ENCODE measurements at regions of chr11 and their contacts with region 1.

Region 1: GRCh38 chr11:65779851-65780577 is 762 bp downstream of the AP5B1 start:
- DNase-seq: peak; percentile 21
- ATAC-seq: peak; percentile 94
- H3K4me3 ChIP-seq: peak overlapping the region; percentile 80
- H3K27ac ChIP-seq: peak overlapping the region; percentile 61
- H3K4me1 ChIP-seq: peaks cover 16% of the 10 kb centered on the region
- H3K27me3 ChIP-seq: no peaks in the 10 kb centered on the region
- CTCF ChIP-seq: peak; percentile 87 to 98 (median 92)
- EP300 ChIP-seq: no peak
- POLR2A ChIP-seq: peak; percentile 48
- RAD21 ChIP-seq: peak; percentile 76

Region 2: GRCh38 chr11:65711785-65712632 is 68.0 kb before region 1 on chr11 and contains the start of gene KAT5:
- CTCF ChIA-PET with region 1: interaction called, 42 read pairs
- POLR2A ChIA-PET with region 1: interaction called, 5 read pairs
- RAD21 ChIA-PET with region 1: interaction called, 18 read pairs
- SMC1A ChIA-PET with region 1: interaction called, 5 read pairs
- in situ Hi-C with region 1: loop called (anchors 5 kb)
- intact Hi-C with region 1: loop called (anchors 5 kb)
- DNase-seq: peak; percentile 94
- ATAC-seq: peak; percentile 89
- H3K4me3 ChIP-seq: peak within 1 kb of the TSS; percentile 85
- H3K27ac ChIP-seq: peak within 1 kb of the TSS; percentile 99
- H3K4me1 ChIP-seq: peaks cover 8% of the 10 kb centered on the region
- H3K27me3 ChIP-seq: no peaks in the 10 kb centered on the region
- CTCF ChIP-seq: peak; percentile 99 to 100 (median 100); a peak in 5 of 6 replicates
- EP300 ChIP-seq: peak in 1 of 2 experiments; percentile 16; a peak in 1 of 4 replicates
- POLR2A ChIP-seq: peak; percentile 92
- RAD21 ChIP-seq: peak; percentile 90
- polyA plus RNA-seq, gene KAT5: 3.4 to 10.2 TPM

Region 3: DNA sequence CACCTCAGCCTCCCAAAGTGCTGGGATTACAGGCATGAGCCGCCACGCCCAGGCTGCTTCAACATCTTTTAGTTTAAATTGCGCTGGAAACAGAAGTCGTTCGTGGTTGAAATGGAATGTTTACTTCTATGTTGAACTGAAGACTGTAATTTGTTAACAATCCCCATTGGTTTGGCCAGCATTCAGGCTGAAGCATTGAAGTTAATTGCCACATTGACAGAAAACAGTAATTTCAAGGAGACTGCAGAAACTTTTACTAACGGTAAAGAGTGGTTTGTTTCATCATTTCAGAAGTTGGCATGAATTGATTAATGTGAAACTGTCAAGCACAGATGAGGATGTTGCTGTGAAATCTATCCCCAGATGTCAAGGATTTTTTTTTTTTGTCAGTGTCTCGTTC is 13.5 kb before region 1 on chr11:
- CTCF ChIA-PET with region 1: interaction called, 45 read pairs
- POLR2A ChIA-PET with region 1: interaction called, 4 read pairs
- RAD21 ChIA-PET with region 1: interaction called, 9 read pairs
- SMC1A ChIA-PET with region 1: interaction called, 8 read pairs
- in situ Hi-C with region 1: no loop called
- intact Hi-C with region 1: no loop called
- DNase-seq: no peak
- ATAC-seq: no peak; the same call in 2 of the 3 replicates
- H3K4me3 ChIP-seq: no peak overlapping the region
- H3K27ac ChIP-seq: no peak overlapping the region
- H3K4me1 ChIP-seq: no peaks in the 10 kb centered on the region
- H3K27me3 ChIP-seq: no peaks in the 10 kb centered on the region
- CTCF ChIP-seq: no peak
- EP300 ChIP-seq: no peak
- POLR2A ChIP-seq: no peak
- RAD21 ChIP-seq: no peak

Region 4: DNA sequence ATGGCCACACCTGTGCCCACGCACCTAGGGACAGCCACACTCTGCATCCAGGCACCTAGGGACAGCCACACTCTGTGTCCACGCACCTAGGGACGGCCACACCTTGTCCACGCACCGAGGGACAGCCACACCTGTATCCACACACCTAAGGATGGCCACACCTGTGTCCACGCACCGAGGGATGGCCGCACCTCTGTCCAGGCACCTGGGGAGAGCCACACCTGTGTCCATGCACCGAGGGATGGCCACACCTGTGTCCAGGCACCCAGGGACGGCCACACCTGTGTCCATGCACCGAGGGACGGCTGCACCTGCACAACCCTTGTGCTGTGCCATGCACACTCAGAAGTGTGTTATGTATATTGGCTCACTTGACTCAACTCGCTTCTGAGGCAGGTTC is 17.7 kb after region 1 on chr11:
- CTCF ChIA-PET with region 1: interaction called, 62 read pairs
- POLR2A ChIA-PET with region 1: interaction called, 17 read pairs
- RAD21 ChIA-PET with region 1: interaction called, 13 read pairs
- SMC1A ChIA-PET with region 1: interaction called, 7 read pairs
- in situ Hi-C with region 1: no loop called
- intact Hi-C with region 1: no loop called
- DNase-seq: no peak
- ATAC-seq: no peak
- H3K4me3 ChIP-seq: no peak overlapping the region
- H3K27ac ChIP-seq: no peak overlapping the region
- H3K4me1 ChIP-seq: peaks cover 6% of the 10 kb centered on the region; the same call in 1 of the 2 replicates
- H3K27me3 ChIP-seq: no peaks in the 10 kb centered on the region
- CTCF ChIP-seq: no peak
- EP300 ChIP-seq: no peak
- POLR2A ChIP-seq: no peak
- RAD21 ChIP-seq: no peak

Region 5: GRCh38 chr11:65811764-65812497 is 31.9 kb after region 1 on chr11:
- CTCF ChIA-PET with region 1: interaction called, 192 read pairs
- POLR2A ChIA-PET with region 1: interaction called, 7 read pairs
- RAD21 ChIA-PET with region 1: interaction called, 91 read pairs
- SMC1A ChIA-PET with region 1: interaction called, 41 read pairs
- in situ Hi-C with region 1: no loop called
- intact Hi-C with region 1: no loop called
- DNase-seq: no peak
- ATAC-seq: peak; percentile 28; the same call in 1 of the 3 replicates
- H3K4me3 ChIP-seq: no peak overlapping the region
- H3K27ac ChIP-seq: no peak overlapping the region
- H3K4me1 ChIP-seq: no peaks in the 10 kb centered on the region; the same call in 1 of the 2 replicates
- H3K27me3 ChIP-seq: no peaks in the 10 kb centered on the region; a peak in 1 of 4 replicates
- CTCF ChIP-seq: no peak
- EP300 ChIP-seq: no peak
- POLR2A ChIP-seq: no peak
- RAD21 ChIP-seq: no peak

Region 6: DNA sequence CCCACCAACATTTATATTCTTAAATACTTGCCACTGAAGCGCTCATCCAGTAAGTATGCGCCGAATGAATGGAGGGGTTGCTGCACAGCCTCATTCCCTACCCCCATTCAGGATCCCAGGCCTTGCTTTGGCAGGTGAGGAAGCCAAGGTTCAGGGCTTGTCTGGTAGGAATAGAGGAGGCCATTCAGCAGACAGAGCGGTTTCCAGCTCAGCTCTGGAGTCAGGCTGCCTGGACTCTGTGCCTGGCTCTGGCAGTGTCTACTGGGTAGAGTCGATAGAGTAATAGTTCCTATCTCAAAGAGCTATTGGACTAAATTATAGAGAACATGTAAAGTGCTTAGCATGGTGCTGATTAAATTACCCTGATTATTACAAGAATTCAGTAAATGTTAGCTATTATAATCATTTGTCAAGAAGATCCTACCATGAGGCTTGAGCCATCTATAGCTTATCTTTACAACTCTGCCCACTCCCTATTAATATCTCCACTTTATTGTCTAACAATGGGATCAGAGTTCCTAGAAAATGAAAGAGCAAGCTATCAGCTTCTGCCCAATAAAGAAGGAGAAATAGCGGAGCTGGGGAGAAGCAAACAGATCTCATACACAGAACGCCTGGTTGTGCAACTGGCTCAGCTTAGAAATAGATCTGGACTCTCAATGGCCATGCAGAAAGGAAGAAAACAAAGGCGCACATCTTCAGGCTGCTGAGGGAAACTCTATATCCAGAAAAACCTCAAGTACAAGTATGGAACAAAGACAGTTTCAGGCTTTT is 47.1 kb after region 1 on chr11:
- CTCF ChIA-PET with region 1: interaction called, 17 read pairs
- POLR2A ChIA-PET with region 1: interaction called, 3 read pairs
- RAD21 ChIA-PET with region 1: no interaction called
- SMC1A ChIA-PET with region 1: no interaction called
- in situ Hi-C with region 1: loop called (anchors 5 kb)
- intact Hi-C with region 1: no loop called
- DNase-seq: no peak
- ATAC-seq: no peak
- H3K4me3 ChIP-seq: no peak overlapping the region
- H3K27ac ChIP-seq: no peak overlapping the region
- H3K4me1 ChIP-seq: no peaks in the 10 kb centered on the region
- H3K27me3 ChIP-seq: 0 out of 4 replicates have a peak, but pooled peaks cover 0 to 3% of the 10 kb centered on the region in 2 experiments
- CTCF ChIP-seq: no peak
- EP300 ChIP-seq: no peak
- POLR2A ChIP-seq: no peak
- RAD21 ChIP-seq: no peak

Region 7: GRCh38 chr11:65859200-65859811 is 79.3 kb after region 1 on chr11:
- CTCF ChIA-PET with region 1: interaction called, 10 read pairs
- POLR2A ChIA-PET with region 1: no interaction called
- RAD21 ChIA-PET with region 1: interaction called, 4 read pairs
- SMC1A ChIA-PET with region 1: no interaction called
- in situ Hi-C with region 1: no loop called
- intact Hi-C with region 1: no loop called
- DNase-seq: peak; percentile 90
- ATAC-seq: peak; percentile 78
- H3K4me3 ChIP-seq: peak overlapping the region; percentile 85
- H3K27ac ChIP-seq: peak overlapping the region; percentile 100
- H3K4me1 ChIP-seq: peaks cover 25% of the 10 kb centered on the region
- H3K27me3 ChIP-seq: no peaks in the 10 kb centered on the region
- CTCF ChIP-seq: no peak
- EP300 ChIP-seq: no peak
- POLR2A ChIP-seq: peak; percentile 87
- RAD21 ChIP-seq: no peak